ENCODE measurements at regions of chr17 and their contacts with region 1.

Region 1: DNA sequence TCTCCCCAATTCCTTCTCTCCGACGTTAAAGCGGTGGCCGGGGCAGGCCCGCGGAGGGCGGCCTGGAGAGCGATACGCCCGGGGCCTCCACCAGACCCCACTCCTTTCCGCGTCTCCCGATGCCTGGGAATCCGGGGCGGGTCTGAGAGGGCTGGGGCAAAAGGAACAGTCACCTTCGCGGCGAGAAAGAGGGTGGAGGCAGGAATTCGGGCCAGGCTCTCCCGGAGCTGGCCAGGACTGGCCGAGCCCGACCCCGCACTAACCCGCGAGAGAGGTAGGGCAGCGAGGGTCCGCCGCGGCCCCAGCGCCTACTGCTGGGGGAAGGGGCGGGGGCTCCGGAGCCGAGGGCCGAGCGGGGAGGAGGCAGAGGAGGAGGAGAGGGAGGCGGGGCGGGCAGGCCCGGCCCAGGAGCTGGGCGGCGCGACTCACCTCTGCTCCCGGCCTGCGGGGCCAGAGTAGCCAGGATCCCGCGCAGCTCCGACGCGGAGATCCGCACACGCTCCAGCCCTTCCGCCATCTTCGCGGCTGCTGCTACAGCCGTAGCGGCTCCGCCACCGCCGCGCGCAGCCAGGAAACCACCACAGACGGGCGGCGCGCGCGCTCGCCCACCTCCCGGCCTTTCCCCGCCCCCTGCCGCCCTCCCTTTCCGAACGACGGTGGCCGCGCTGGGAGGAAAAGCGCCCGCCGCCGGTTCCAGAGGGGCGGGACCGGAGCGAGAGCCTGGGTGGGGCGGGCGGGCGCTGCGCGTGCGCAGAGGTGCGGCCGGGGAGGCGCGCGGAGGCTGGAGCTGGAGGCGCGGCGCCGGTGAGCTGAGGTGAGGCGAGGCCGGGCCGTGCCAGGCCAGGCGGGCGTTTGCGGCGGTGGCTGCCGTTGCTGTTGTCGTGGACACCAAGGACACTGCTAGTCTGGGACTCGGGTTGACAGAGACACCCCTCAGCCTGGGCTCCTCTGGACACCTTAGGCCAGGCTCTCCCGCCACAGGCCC is at the starts of genes SMG6 and SRR:
- DNase-seq: peak; percentile 92
- H3K4me3 ChIP-seq: peak within 1 kb of the TSS; percentile 92 to 99 (median 96)
- H3K27ac ChIP-seq: peak within 1 kb of the TSS; percentile 85
- H3K4me1 ChIP-seq: peaks cover 16% of the 10 kb centered on the region
- H3K27me3 ChIP-seq: no peaks in the 10 kb centered on the region
- CTCF ChIP-seq: no peak
- total RNA-seq, gene SMG6: 22.8 to 27.7 TPM
- total RNA-seq, gene SRR: 9.8 to 18.5 TPM

Region 2: DNA sequence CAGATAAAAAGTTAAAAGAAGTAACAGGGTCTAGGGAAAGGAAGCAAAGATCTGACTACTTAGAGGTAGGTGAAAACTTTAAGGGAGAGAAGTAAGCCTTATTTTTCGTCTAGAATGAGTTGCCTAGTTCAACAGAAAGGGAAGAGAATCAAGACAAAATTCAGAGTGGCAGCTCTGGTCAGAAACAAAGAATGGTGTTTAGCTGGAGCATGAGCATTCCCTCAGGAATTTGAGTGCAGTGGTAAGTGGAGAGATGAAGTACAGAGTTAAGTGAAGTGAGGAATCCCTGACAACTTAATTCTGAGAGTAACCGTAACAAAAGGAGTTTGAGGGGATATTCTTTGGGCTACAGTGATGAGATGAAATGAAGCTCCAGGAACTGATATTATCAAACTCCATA is 11.4 kb before region 1 on chr17:
- CTCF ChIA-PET with region 1: no interaction called
- dilution Hi-C with region 1: no loop called
- in situ Hi-C with region 1: no loop called
- intact Hi-C with region 1: no loop called
- DNase-seq: peak; percentile 7
- H3K4me3 ChIP-seq: no peak overlapping the region
- H3K27ac ChIP-seq: no peak overlapping the region
- H3K4me1 ChIP-seq: peaks cover 12% of the 10 kb centered on the region
- H3K27me3 ChIP-seq: no peaks in the 10 kb centered on the region
- CTCF ChIP-seq: no peak

Region 3: DNA sequence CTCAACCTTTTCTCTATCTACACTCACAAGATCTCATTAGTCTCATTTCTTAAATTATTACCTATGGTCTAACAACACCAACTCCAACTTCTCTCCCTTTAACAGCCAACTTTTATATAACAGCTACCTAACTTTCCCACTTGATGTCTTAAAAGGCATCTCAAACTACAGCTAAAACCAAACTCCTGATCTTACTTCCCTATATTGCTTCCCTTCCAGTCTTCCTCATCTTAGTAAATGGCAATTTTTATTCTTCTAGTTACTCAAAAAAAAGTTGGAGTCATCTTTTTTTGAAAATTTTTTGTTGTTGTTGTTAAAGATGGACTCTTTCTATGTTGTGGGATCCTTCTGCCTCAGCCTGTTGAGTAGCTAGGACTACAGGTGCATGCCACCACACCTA is 15.6 kb after region 1 on chr17:
- CTCF ChIA-PET with region 1: interaction called, 14 read pairs
- dilution Hi-C with region 1: no loop called
- in situ Hi-C with region 1: no loop called
- intact Hi-C with region 1: no loop called
- DNase-seq: no peak
- H3K4me3 ChIP-seq: no peak overlapping the region
- H3K27ac ChIP-seq: no peak overlapping the region
- H3K4me1 ChIP-seq: no peaks in the 10 kb centered on the region
- H3K27me3 ChIP-seq: no peaks in the 10 kb centered on the region
- CTCF ChIP-seq: no peak

Region 4: GRCh38 chr17:2363851-2364762 is 60.6 kb after region 1 on chr17:
- CTCF ChIA-PET with region 1: no interaction called
- dilution Hi-C with region 1: no loop called
- in situ Hi-C with region 1: no loop called
- intact Hi-C with region 1: no loop called
- DNase-seq: no peak
- H3K4me3 ChIP-seq: no peak overlapping the region
- H3K27ac ChIP-seq: no peak overlapping the region
- H3K4me1 ChIP-seq: peaks cover 12% of the 10 kb centered on the region
- H3K27me3 ChIP-seq: no peaks in the 10 kb centered on the region
- CTCF ChIP-seq: no peak

Measured in mammary epithelial cell (primary cell).